ENCODE measurements at regions of chr3 and their contacts with region 1.

Region 1: GRCh38 chr3:184777336-184778004 is 34.5 kb upstream of the VPS8 start:
- DNase-seq: peak; percentile 91
- H3K4me3 ChIP-seq: no peak overlapping the region; a peak in 1 of 4 replicates
- H3K27ac ChIP-seq: no peak overlapping the region
- H3K4me1 ChIP-seq: peaks cover 0 to 13% of the 10 kb centered on the region in 2 experiments; a peak in 1 of 4 replicates
- H3K27me3 ChIP-seq: no peaks in the 10 kb centered on the region
- CTCF ChIP-seq: peak; percentile 84
- EP300 ChIP-seq: no peak
- RAD21 ChIP-seq: peak; percentile 99

Region 2: GRCh38 chr3:184549793-184550577 is 227.5 kb before region 1 on chr3:
- CTCF ChIA-PET with region 1: interaction called, 25 read pairs
- POLR2A ChIA-PET with region 1: no interaction called
- DNase-seq: no peak
- H3K4me3 ChIP-seq: no peak overlapping the region
- H3K27ac ChIP-seq: no peak overlapping the region
- H3K4me1 ChIP-seq: no peaks in the 10 kb centered on the region
- H3K27me3 ChIP-seq: peaks cover 9% of the 10 kb centered on the region; the same call in 1 of the 2 replicates
- CTCF ChIP-seq: no peak
- EP300 ChIP-seq: no peak
- RAD21 ChIP-seq: no peak

Region 3: DNA sequence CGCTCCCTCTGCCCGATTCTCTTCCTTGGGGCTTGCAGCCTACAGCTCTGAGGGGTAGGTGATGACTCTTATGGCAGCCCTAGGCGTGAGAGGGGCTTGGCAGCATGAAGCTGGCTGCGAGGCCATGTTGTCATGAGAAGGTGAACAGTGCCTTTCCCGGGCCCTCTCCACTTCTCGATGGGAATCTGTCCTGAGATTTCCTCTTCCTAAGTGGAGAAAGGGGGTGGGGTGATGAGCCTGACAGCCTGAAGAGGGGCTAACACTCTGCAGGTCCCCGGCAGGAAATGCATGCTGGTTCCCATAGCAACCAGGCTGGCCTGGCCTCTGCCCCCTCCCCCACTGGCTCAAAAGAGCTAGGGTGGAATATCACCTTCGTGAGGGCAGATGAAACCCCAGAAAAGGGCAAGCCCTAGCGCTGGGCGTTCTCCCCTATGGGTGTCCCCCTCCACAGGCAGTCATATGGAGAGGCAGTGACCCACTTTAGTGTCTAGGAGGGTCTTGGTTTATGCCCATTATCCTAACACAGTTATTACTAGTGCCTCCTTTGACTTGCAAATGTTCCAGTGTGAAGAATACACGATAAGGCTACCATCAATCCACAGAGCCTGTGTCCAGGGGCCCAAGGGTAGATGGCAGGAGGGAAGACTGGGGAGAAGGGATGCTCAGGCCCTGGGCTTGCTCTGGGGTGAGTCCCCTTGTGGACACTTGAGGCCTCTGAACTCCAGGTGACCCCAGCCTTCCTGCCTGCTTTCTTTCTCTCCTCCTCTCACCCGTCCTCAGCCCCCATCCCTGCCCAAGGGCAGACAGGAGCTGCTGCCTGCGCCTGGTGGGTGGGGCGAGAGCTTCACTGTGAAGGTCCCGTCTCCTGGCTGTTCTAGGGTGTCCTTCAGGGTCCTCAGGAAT is 202.7 kb before region 1 on chr3:
- CTCF ChIA-PET with region 1: interaction called, 10 read pairs
- POLR2A ChIA-PET with region 1: no interaction called
- DNase-seq: peak; percentile 88
- H3K4me3 ChIP-seq: no peak overlapping the region
- H3K27ac ChIP-seq: peak overlapping the region in 1 of 2 experiments; percentile 84; a peak in 2 of 4 replicates
- H3K4me1 ChIP-seq: peaks cover 0 to 34% of the 10 kb centered on the region in 2 experiments; a peak in 2 of 4 replicates
- H3K27me3 ChIP-seq: no peaks in the 10 kb centered on the region
- CTCF ChIP-seq: no peak
- EP300 ChIP-seq: no peak
- RAD21 ChIP-seq: 0 out of 2 replicates have a peak, but pooled peaks have one; percentile 13

Region 4: DNA sequence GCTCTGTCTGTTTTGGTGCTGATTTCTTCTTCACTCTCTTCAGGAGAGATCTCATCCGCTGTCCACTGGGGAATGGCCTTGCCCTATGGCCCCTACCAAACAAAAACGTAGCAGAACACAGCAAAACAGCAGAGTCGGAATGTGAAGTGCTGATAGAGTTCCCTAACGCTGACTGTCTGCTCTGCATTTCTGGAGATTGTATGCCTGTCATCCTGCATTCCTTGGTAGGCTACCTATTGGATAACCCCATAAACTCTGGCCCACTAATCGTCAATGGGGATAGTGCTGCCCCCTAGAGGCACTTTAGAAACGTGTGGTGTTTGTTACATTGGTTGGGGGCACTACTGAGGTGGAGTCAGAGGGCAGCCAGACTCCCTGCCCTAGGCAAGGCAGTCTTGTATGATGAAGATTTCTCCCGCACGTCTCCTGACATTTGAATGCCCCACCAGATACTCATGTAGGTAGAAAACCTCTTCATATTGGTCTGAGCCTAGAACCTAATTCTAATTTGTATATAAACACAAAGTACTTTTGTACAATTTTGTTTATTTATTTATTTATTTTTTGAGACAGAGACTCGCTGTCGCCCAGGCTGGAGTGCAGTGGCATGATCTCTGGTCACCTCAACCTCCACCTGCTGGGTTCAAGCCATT is 50.0 kb before region 1 on chr3:
- CTCF ChIA-PET with region 1: interaction called, 26 read pairs
- POLR2A ChIA-PET with region 1: no interaction called
- DNase-seq: peak; percentile 88
- H3K4me3 ChIP-seq: peak overlapping the region in 1 of 2 experiments; percentile 43; a peak in 1 of 4 replicates
- H3K27ac ChIP-seq: peak overlapping the region in 1 of 2 experiments; percentile 50; a peak in 2 of 4 replicates
- H3K4me1 ChIP-seq: peaks cover 0 to 22% of the 10 kb centered on the region in 2 experiments; a peak in 2 of 4 replicates
- H3K27me3 ChIP-seq: no peaks in the 10 kb centered on the region
- CTCF ChIP-seq: peak; percentile 86
- EP300 ChIP-seq: no peak
- RAD21 ChIP-seq: peak; percentile 87

Region 5: GRCh38 chr3:184750349-184751083 is 27.0 kb before region 1 on chr3:
- CTCF ChIA-PET with region 1: interaction called, 12 read pairs
- POLR2A ChIA-PET with region 1: interaction called, 4 read pairs
- DNase-seq: no peak
- H3K4me3 ChIP-seq: no peak overlapping the region
- H3K27ac ChIP-seq: no peak overlapping the region
- H3K4me1 ChIP-seq: no peaks in the 10 kb centered on the region; a peak in 1 of 4 replicates
- H3K27me3 ChIP-seq: no peaks in the 10 kb centered on the region; the same call in 1 of the 2 replicates
- CTCF ChIP-seq: no peak
- EP300 ChIP-seq: no peak
- RAD21 ChIP-seq: no peak

Region 6: DNA sequence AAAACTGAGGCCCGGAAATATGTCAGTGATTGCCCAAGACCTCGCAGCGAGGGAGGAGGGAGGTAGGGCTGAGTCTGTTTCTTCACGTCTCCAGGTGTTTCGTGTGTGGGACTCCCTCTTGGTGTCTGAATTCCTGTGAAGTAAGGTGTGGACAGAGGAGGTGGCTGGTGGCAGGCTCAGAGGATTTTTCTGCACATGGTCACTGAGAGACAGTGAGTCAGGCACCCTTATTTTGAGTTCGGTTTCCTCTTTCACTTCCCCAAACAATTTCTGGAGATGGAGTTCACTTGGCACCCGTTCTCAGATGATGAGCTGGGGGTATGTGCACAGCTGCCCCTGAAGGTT is 11.8 kb before region 1 on chr3:
- CTCF ChIA-PET with region 1: interaction called, 11 read pairs
- POLR2A ChIA-PET with region 1: no interaction called
- DNase-seq: no peak
- H3K4me3 ChIP-seq: no peak overlapping the region
- H3K27ac ChIP-seq: no peak overlapping the region
- H3K4me1 ChIP-seq: peaks cover 0 to 2% of the 10 kb centered on the region in 2 experiments; a peak in 1 of 4 replicates
- H3K27me3 ChIP-seq: no peaks in the 10 kb centered on the region
- CTCF ChIP-seq: no peak
- EP300 ChIP-seq: no peak
- RAD21 ChIP-seq: no peak

Region 7: DNA sequence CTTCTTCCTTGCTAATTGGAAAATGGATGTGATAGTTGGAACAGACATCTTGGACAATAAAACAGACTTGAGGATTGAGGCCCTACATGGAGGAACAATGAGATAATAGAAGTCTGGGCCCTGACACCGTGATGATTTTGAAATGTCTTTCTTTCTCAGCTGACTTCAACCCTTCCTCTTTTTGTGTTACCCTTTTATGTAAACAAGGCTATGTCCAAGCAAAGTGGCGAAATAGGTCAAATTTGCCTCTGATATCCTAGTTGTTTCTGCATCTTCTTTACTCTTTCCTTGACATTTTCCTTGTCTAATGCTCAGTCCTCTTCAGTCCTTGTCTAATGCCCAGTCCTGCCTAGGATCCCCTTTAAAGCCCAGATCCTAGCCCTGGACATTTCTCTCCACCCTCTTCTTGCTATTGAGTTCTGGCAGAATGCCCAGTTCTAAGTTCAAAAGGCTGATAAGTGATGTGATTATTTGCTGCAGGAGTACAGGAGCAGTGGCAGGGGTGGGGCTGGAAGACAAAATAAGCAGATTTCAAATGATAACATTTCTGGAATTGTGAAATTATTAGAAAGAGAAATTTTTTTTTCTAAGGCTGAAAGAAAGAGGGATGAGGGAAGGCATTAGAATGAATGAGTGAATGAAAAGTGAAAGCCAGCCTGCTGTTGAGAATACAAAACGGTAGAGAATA is 28.0 kb after region 1 on chr3:
- CTCF ChIA-PET with region 1: interaction called, 23 read pairs
- POLR2A ChIA-PET with region 1: no interaction called
- DNase-seq: peak; percentile 69
- H3K4me3 ChIP-seq: no peak overlapping the region
- H3K27ac ChIP-seq: no peak overlapping the region
- H3K4me1 ChIP-seq: peaks cover 0 to 9% of the 10 kb centered on the region in 2 experiments; a peak in 2 of 4 replicates
- H3K27me3 ChIP-seq: no peaks in the 10 kb centered on the region; the same call in 1 of the 2 replicates
- CTCF ChIP-seq: no peak
- EP300 ChIP-seq: peak in 1 of 2 experiments; percentile 35; a peak in 1 of 4 replicates
- RAD21 ChIP-seq: no peak; the same call in 1 of the 2 replicates

Region 8: GRCh38 chr3:184927796-184928315 is 150.4 kb after region 1 on chr3:
- CTCF ChIA-PET with region 1: no interaction called
- POLR2A ChIA-PET with region 1: no interaction called
- DNase-seq: no peak
- H3K4me3 ChIP-seq: no peak overlapping the region
- H3K27ac ChIP-seq: no peak overlapping the region
- H3K4me1 ChIP-seq: no peaks in the 10 kb centered on the region
- H3K27me3 ChIP-seq: no peaks in the 10 kb centered on the region
- CTCF ChIP-seq: no peak
- EP300 ChIP-seq: no peak
- RAD21 ChIP-seq: no peak

Region 9: DNA sequence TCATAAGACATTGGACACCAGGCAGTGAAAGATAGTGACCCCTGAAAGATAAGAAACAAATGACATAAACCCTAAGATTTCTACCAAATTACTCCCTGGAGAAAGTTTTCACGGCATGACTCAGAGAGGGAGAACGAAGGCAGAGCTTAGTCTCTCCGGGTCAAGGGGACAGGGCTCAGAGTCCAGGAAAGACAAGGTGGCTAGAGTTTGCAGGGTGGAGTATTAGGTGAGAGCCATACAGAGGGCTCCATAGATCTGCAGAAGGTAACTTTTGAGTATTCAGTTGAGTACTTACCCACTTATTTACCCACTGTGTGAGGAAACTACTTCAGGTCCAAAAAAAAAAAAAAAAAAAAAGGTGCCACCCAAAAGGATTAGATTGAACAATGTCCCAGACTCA is 232.2 kb after region 1 on chr3:
- CTCF ChIA-PET with region 1: no interaction called
- POLR2A ChIA-PET with region 1: no interaction called
- DNase-seq: no peak
- H3K4me3 ChIP-seq: no peak overlapping the region
- H3K27ac ChIP-seq: no peak overlapping the region
- H3K4me1 ChIP-seq: peaks cover 0 to 3% of the 10 kb centered on the region in 2 experiments; a peak in 1 of 4 replicates
- H3K27me3 ChIP-seq: no peaks in the 10 kb centered on the region
- CTCF ChIP-seq: no peak
- EP300 ChIP-seq: no peak
- RAD21 ChIP-seq: no peak

Measured in SK-N-SH (cell line).